HEK293 (cell line): ENCODE measurements at regions of chr19 and their contacts with region 1.

Region 1: GRCh38 chr19:54674021-54674617 is 11.3 kb downstream of the LILRB4 start:
- H3K4me3 ChIP-seq: no peak overlapping the region
- H3K27ac ChIP-seq: no peak overlapping the region
- H3K4me1 ChIP-seq: no peaks in the 10 kb centered on the region
- CTCF ChIP-seq: no peak

Region 2: DNA sequence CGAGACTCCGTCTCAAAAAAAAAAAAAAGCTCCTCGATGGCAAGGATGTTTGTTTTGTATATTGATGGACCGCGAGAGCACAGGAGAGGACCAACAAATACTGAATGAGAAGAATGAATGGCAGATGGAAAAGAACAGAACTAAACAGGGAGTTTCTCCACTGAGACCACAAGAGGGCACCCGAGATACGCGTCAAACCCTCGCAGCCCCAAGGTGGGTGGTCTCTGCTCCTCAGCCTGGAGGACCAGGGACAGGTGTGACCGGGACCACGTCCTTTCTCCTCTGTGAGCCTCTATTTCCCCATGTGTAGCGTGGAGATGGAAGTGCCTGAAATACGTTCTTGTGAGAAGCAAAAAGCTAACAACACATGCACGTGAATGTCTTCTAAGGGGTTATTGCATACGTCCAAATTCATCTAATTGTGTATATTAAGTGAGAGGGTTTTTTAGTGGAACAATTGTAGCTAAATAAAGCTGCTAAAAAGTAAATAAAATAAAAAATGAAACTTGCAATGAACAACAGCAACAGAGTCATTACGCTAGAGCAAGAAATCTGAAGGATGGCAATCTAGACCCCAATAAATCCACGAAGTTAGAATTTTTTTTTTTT is 192.7 kb before region 1 on chr19:
- CTCF ChIA-PET with region 1: interaction called, 65 read pairs
- POLR2A ChIA-PET with region 1: no interaction called
- H3K4me3 ChIP-seq: no peak overlapping the region
- H3K27ac ChIP-seq: no peak overlapping the region
- H3K4me1 ChIP-seq: no peaks in the 10 kb centered on the region
- CTCF ChIP-seq: peak; percentile 67

Region 3: GRCh38 chr19:54551950-54552912 is 121.9 kb before region 1 on chr19:
- CTCF ChIA-PET with region 1: no interaction called
- POLR2A ChIA-PET with region 1: no interaction called
- H3K4me3 ChIP-seq: no peak overlapping the region
- H3K27ac ChIP-seq: no peak overlapping the region
- H3K4me1 ChIP-seq: no peaks in the 10 kb centered on the region
- CTCF ChIP-seq: no peak

Region 4: GRCh38 chr19:54653181-54653809 is 20.8 kb before region 1 on chr19:
- CTCF ChIA-PET with region 1: interaction called, 28 read pairs
- POLR2A ChIA-PET with region 1: interaction called, 3 read pairs
- H3K4me3 ChIP-seq: no peak overlapping the region
- H3K27ac ChIP-seq: no peak overlapping the region
- H3K4me1 ChIP-seq: no peaks in the 10 kb centered on the region
- CTCF ChIP-seq: no peak

Region 5: DNA sequence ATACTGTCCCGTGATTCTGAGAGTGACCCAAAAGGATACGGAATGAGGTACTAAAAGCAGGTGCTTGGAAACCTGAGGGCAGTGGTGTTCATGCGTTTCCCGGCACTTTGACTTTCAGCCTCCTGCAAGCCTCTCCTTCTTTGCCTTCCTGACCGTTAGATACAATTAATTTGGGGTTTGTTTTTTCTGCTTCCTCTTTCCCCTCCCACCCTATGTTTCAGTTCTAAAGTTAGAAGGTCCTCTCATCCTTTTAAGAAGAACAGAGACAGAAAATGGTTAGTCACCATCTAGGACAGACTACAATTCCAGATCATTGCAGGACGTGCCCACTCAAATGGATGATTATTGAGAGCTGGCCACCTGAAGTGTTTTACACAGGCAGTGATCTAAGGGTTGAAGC is 13.2 kb before region 1 on chr19:
- CTCF ChIA-PET with region 1: interaction called, 18 read pairs
- POLR2A ChIA-PET with region 1: no interaction called
- H3K4me3 ChIP-seq: no peak overlapping the region
- H3K27ac ChIP-seq: no peak overlapping the region
- H3K4me1 ChIP-seq: no peaks in the 10 kb centered on the region
- CTCF ChIP-seq: no peak

Region 6: DNA sequence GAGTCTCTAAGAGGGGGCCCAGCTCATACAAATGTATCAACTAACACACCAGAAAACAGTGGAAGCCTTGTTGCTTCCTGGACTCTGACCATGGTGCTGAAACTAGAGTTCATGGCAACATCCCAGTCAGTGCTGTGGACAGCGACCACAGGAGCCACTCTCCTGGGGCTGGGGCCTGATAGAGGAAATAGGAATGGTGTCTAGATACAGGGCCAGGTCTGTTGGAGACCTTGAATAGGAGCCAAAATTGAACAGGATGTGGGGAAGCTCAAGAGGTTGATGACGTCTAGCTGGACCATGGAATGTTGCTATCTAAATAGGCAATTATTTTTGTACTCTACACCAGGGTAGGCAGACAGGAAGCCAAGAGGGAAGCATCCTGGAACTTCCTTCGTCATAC is 10.4 kb after region 1 on chr19:
- CTCF ChIA-PET with region 1: interaction called, 37 read pairs
- POLR2A ChIA-PET with region 1: no interaction called
- H3K4me3 ChIP-seq: no peak overlapping the region
- H3K27ac ChIP-seq: no peak overlapping the region
- H3K4me1 ChIP-seq: no peaks in the 10 kb centered on the region
- CTCF ChIP-seq: no peak

Region 7: GRCh38 chr19:54731191-54731590 is 57.1 kb after region 1 on chr19:
- CTCF ChIA-PET with region 1: no interaction called
- POLR2A ChIA-PET with region 1: no interaction called
- H3K4me3 ChIP-seq: no peak overlapping the region
- H3K27ac ChIP-seq: no peak overlapping the region
- H3K4me1 ChIP-seq: no peaks in the 10 kb centered on the region
- CTCF ChIP-seq: no peak

Region 8: GRCh38 chr19:54882758-54883157 is 208.6 kb after region 1 on chr19:
- CTCF ChIA-PET with region 1: interaction called, 19 read pairs
- POLR2A ChIA-PET with region 1: no interaction called
- H3K4me3 ChIP-seq: no peak overlapping the region
- H3K27ac ChIP-seq: no peak overlapping the region
- H3K4me1 ChIP-seq: no peaks in the 10 kb centered on the region
- CTCF ChIP-seq: 0 out of 2 replicates have a peak, but pooled peaks have one; percentile 8

Region 9: DNA sequence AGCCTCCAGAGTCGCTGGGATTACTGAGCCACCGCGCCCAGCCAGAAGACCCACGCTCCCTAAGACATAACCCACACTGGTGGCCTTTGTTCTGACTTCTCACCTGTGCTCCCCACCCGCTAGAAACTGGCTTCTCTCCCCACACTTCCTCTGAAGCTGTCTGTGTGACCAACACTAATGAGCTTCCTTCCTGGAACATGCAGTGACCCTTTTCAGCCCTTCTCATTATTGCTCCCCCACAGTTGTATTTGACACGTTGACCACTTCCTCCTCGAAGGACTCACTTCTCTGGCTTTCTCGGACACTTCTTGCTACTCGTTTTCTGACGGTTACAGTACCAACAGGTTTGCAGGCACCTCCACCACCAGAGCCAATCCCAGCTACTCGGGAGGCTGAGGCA is 242.7 kb after region 1 on chr19:
- CTCF ChIA-PET with region 1: interaction called, 26 read pairs
- POLR2A ChIA-PET with region 1: no interaction called
- H3K4me3 ChIP-seq: no peak overlapping the region
- H3K27ac ChIP-seq: no peak overlapping the region
- H3K4me1 ChIP-seq: no peaks in the 10 kb centered on the region
- CTCF ChIP-seq: no peak

Region 10: DNA sequence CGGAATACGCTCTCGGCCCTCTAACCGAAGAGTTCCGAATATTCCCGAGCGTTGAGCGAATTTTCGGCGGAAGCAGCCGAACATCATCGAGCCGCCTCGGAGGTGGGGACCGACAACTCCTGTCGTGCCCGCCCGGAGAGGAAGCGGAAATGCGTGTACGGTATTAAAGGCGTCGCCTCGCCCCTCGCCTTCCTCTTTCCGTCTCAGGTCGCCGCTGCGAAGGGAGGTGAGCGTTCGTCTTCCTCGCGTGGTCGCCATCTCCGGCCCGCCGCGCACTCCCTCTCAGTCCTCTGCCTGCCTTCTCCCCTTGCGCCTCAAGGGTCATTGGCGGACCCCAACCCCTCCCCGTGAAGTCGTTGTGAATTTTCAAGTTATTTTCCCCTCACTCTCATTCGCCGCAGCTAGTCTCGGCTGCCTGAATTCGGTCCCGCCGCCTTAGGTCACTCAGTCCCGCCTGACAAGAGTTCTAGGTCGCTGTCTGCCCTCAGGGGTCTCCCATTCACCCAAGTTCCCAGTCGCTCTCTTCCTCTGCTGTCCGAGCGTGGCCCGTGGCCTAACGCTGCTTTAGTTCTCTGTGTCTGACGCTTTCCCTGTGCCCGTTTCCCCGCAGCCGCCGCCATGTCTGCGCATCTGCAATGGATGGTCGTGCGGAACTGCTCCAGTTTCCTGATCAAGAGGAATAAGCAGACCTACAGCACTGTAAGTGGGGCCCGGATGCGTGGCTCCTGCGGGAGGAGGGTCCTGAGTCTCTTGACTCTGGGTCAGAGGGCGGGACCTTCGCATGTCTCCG is 711.8 kb after region 1 on chr19 and contains the start of gene RPL28:
- CTCF ChIA-PET with region 1: no interaction called
- POLR2A ChIA-PET with region 1: no interaction called
- H3K4me3 ChIP-seq: peak within 1 kb of the TSS; percentile 94
- H3K27ac ChIP-seq: peak within 1 kb of the TSS; percentile 84
- H3K4me1 ChIP-seq: peaks cover 27% of the 10 kb centered on the region
- CTCF ChIP-seq: 0 out of 2 replicates have a peak, but pooled peaks have one; percentile 31